GM12878 (cell line): ENCODE measurements at regions of chr15 and their contacts with region 1.

Region 1: GRCh38 chr15:51281368-51281967 is 56.9 kb downstream of the CYP19A1 start:
- DNase-seq: no peak
- ATAC-seq: peak; percentile 93
- H3K4me3 ChIP-seq: no peak overlapping the region
- H3K27ac ChIP-seq: no peak overlapping the region
- H3K4me1 ChIP-seq: peaks cover 10% of the 10 kb centered on the region
- H3K27me3 ChIP-seq: peaks cover 0 to under 1% of the 10 kb centered on the region in 2 experiments; a peak in 1 of 4 replicates
- CTCF ChIP-seq: peak; percentile 61 to 71 (median 68); a peak in 5 of 6 replicates
- EP300 ChIP-seq: no peak
- POLR2A ChIP-seq: no peak
- RAD21 ChIP-seq: peak; percentile 75

Region 2: GRCh38 chr15:51227940-51228783 is 53.3 kb before region 1 on chr15:
- CTCF ChIA-PET with region 1: interaction called, 92 read pairs
- POLR2A ChIA-PET with region 1: no interaction called
- RAD21 ChIA-PET with region 1: interaction called, 20 read pairs
- SMC1A ChIA-PET with region 1: interaction called, 19 read pairs
- in situ Hi-C with region 1: no loop called
- intact Hi-C with region 1: loop called (anchors 2 kb)
- DNase-seq: peak; percentile 76
- ATAC-seq: peak; percentile 97
- H3K4me3 ChIP-seq: peak overlapping the region; percentile 24; the same call in 1 of the 2 replicates
- H3K27ac ChIP-seq: peak overlapping the region; percentile 75
- H3K4me1 ChIP-seq: peaks cover 16% of the 10 kb centered on the region
- H3K27me3 ChIP-seq: no peaks in the 10 kb centered on the region
- CTCF ChIP-seq: no peak
- EP300 ChIP-seq: no peak
- POLR2A ChIP-seq: peak; percentile 27; the same call in 1 of the 2 replicates
- RAD21 ChIP-seq: no peak

Region 3: DNA sequence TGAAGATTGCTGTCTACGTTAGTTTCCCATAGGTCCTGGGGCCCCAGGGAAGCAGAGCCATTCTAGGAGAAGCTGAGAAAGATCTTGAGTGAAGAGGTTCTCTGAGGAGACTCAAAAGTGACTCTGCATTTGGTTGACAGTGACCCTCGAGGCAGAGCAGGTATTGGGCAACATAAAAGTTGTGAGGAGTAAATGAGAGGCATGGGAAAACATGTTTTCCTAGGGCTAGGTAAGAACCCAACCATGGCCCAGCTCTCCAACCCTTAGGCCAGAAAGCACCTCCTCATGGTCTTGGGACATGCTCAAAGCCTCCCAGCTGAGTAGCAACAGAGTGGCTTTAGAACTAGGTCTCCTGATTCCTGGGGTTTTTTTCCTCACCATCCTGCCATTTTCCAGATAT is 59.1 kb after region 1 on chr15:
- CTCF ChIA-PET with region 1: no interaction called
- POLR2A ChIA-PET with region 1: no interaction called
- RAD21 ChIA-PET with region 1: no interaction called
- SMC1A ChIA-PET with region 1: no interaction called
- in situ Hi-C with region 1: no loop called
- intact Hi-C with region 1: no loop called
- DNase-seq: no peak
- ATAC-seq: no peak
- H3K4me3 ChIP-seq: no peak overlapping the region
- H3K27ac ChIP-seq: no peak overlapping the region
- H3K4me1 ChIP-seq: peaks cover 4% of the 10 kb centered on the region
- H3K27me3 ChIP-seq: peaks cover 9 to 27% of the 10 kb centered on the region in 2 experiments; a peak in 3 of 4 replicates
- CTCF ChIP-seq: no peak
- EP300 ChIP-seq: no peak
- POLR2A ChIP-seq: no peak
- RAD21 ChIP-seq: no peak

Region 4: DNA sequence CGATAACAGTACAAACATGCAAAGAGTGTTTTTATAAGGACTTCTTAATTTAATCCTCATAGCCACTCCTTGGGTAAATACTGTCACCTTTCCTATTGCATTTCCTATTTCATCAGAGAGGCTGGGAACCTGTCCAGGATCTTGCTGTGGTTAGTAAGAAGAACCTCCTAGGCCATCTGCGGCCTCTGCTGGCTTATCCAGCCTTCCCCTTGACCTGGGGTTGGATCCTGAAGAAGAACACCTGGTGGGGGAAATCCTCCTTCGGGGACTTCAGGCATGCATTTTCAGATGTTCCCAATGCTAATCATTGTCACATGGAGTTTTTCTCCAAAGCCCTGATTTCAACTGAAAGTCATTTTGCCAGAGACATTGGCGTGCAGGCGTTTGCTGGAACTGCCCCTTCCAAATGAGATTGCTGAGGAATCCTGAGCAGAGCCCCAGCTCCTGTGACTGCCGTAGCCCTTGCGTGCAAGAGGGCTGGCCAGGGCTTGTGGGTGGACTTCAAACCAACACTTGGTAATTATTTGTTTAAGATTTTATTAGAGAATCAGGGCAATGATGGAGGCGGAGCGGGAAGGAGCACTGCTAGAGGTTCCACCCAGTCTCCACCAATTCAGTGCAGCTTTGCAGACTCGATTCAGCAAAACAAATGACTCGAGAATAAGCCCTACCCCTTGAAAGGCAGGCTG is 85.6 kb after region 1 on chr15:
- CTCF ChIA-PET with region 1: interaction called, 9 read pairs
- POLR2A ChIA-PET with region 1: no interaction called
- RAD21 ChIA-PET with region 1: interaction called, 10 read pairs
- SMC1A ChIA-PET with region 1: interaction called, 10 read pairs
- in situ Hi-C with region 1: no loop called
- intact Hi-C with region 1: no loop called
- DNase-seq: no peak
- ATAC-seq: no peak
- H3K4me3 ChIP-seq: no peak overlapping the region
- H3K27ac ChIP-seq: no peak overlapping the region
- H3K4me1 ChIP-seq: peaks cover 4% of the 10 kb centered on the region
- H3K27me3 ChIP-seq: peaks cover 5 to 8% of the 10 kb centered on the region in 2 experiments; a peak in 3 of 4 replicates
- CTCF ChIP-seq: no peak
- EP300 ChIP-seq: no peak
- POLR2A ChIP-seq: no peak
- RAD21 ChIP-seq: no peak

Region 5: GRCh38 chr15:51401872-51402517 is 120.5 kb after region 1 on chr15:
- CTCF ChIA-PET with region 1: interaction called, 20 read pairs
- POLR2A ChIA-PET with region 1: no interaction called
- RAD21 ChIA-PET with region 1: interaction called, 3 read pairs
- SMC1A ChIA-PET with region 1: interaction called, 3 read pairs
- in situ Hi-C with region 1: no loop called
- intact Hi-C with region 1: loop called (anchors 1 kb)
- DNase-seq: no peak
- ATAC-seq: peak; percentile 48; the same call in 2 of the 3 replicates
- H3K4me3 ChIP-seq: no peak overlapping the region
- H3K27ac ChIP-seq: no peak overlapping the region
- H3K4me1 ChIP-seq: no peaks in the 10 kb centered on the region
- H3K27me3 ChIP-seq: peaks cover 3 to 4% of the 10 kb centered on the region in 2 experiments; a peak in 3 of 4 replicates
- CTCF ChIP-seq: peak; percentile 48 to 60 (median 52)
- EP300 ChIP-seq: no peak
- POLR2A ChIP-seq: no peak
- RAD21 ChIP-seq: peak; percentile 56